ENCODE measurements at regions of chr10 and their contacts with region 1.

Region 1: DNA sequence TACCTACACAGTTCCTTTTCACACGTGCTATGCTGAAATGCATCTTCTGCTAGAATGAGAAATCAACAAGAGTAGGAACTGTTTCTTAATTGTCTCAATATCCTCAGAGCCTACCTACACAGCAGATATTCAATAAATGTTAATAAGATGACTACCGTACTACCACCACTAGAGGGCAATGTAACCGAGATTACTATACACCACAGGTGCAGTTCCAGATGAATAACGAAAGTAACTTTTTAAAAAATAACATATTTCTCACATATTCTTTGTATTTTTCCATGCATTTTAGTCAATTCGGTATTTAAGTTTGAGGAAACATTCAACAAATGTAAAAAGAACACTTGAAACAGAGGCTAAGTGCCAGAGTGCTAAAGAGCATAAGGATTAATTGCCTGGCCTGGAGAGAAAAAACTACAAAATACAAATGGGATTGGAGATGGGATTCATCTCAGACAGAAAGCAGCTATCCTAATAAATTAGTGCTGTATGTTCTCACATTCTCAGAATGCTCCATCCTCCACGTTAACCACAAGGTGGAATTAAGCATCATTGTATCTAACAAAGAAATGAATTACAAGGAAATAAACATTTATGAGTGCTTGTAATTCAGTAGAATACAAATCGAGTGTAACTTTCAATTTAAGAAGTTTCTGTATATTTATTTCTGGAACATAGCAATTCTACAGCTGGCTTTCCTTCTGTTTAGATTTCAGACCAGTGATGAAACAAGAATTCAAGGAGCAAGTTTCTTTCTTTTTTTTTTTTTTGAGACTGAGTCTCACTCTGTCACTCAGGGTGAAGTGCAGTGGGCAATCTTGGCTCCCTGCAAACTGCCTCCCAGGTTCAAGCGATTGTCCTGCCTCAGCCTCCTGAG is 20.3 kb upstream of the HECTD2 start:
- DNase-seq: no peak
- ATAC-seq: peak; percentile 72 to 73
- H3K4me3 ChIP-seq: no peak overlapping the region
- H3K27ac ChIP-seq: no peak overlapping the region
- H3K4me1 ChIP-seq: no peaks in the 10 kb centered on the region
- H3K27me3 ChIP-seq: no peaks in the 10 kb centered on the region

Region 2: DNA sequence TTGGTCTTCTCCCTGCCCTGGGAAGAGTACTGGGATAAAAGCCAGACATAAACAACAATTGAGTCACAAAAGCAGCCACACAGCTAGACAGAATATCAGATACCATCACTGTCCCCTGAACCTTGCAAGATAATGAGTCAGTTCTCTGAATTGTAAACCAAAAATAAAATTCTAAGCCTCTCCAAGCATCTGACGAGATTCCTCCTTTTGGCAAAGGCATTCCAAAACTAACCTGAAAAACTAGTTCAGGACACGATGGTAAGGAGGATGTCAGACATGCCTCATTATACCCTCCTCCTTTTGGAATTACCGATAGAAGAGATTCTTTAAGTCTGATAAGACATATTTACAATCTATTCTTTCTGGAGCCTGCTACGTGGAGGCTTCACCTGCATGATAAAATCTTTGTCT is 982.7 kb before region 1 on chr10:
- intact Hi-C with region 1: no loop called
- DNase-seq: no peak
- ATAC-seq: no peak
- H3K4me3 ChIP-seq: no peak overlapping the region
- H3K27ac ChIP-seq: no peak overlapping the region
- H3K4me1 ChIP-seq: no peaks in the 10 kb centered on the region
- H3K27me3 ChIP-seq: no peaks in the 10 kb centered on the region

Region 3: DNA sequence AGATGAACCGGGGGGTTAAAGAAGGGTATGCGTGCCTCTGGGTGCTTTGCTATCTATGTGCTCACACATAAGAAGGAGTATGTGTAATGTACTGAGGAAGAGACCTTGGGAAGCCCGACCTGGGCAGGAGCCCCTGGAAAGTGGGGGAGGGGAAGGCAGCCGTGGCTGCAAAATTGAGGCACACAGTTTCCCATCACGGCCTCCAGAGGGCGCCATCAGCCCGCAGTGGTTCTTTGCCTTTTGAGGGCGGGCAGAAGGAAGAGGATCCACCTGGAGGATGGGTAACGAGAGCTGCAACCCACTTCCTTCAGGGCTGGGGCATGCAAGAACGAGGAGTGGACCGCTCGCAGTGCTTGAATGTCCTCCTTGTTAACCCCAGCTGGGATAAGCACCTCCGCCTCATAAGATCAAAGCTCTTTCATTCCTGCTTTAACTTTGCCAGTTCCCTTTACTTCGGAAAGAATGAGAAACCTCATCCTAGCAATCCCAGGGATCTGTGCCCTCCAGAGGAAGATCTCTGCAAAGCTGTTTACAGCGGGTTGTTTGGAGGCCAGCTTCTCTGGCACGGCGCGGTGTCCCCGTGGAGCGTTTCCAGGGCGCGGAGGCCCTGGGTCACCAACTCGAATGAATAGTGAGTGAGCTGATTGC is 91.5 kb before region 1 on chr10:
- intact Hi-C with region 1: loop called in 2 of 4 experiments (anchors 10 kb)
- DNase-seq: peak; percentile 71 to 88 (median 86)
- ATAC-seq: peak; percentile 90 to 93
- H3K4me3 ChIP-seq: peak overlapping the region; percentile 36
- H3K27ac ChIP-seq: peak overlapping the region; percentile 1
- H3K4me1 ChIP-seq: no peaks in the 10 kb centered on the region
- H3K27me3 ChIP-seq: no peaks in the 10 kb centered on the region

Region 4: GRCh38 chr10:91444211-91445182 is 54.6 kb after region 1 on chr10:
- intact Hi-C with region 1: no loop called
- DNase-seq: no peak
- ATAC-seq: no peak
- H3K4me3 ChIP-seq: no peak overlapping the region
- H3K27ac ChIP-seq: no peak overlapping the region
- H3K4me1 ChIP-seq: no peaks in the 10 kb centered on the region
- H3K27me3 ChIP-seq: no peaks in the 10 kb centered on the region

Region 5: DNA sequence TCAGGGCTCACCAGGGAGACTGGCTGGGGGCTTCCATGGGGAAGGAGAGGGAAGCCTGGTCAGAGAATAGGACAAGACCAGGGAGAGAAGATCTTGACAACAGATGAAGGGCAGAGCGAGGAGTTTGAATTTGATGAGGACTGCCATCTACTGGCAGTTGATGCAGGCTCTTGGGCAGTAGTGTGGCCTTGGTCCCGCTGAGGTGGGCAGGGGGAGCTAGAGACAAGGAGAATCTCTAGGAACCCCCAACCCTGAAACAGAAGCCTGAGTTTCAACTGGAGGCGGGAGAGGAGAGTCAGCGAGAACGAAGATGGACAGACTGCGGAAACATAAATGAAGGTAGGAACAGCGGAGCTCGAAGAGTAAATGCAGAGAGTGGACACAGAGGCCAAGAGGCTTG is 162.0 kb after region 1 on chr10:
- intact Hi-C with region 1: loop called in 1 of 4 experiments (anchors 5 kb)
- DNase-seq: peak; percentile 42 to 82 (median 67)
- ATAC-seq: peak; percentile 85 to 86
- H3K4me3 ChIP-seq: no peak overlapping the region
- H3K27ac ChIP-seq: peak overlapping the region; percentile 20
- H3K4me1 ChIP-seq: peaks cover 5% of the 10 kb centered on the region
- H3K27me3 ChIP-seq: no peaks in the 10 kb centered on the region